ENCODE measurements at regions of chr11 and their contacts with region 1.

Region 1: GRCh38 chr11:126416542-126417090 is 61.1 kb downstream of the ST3GAL4 start:
- DNase-seq: no peak
- ATAC-seq: no peak
- H3K4me3 ChIP-seq: no peak overlapping the region
- H3K27ac ChIP-seq: no peak overlapping the region
- H3K4me1 ChIP-seq: peaks cover 5 to 9% of the 10 kb centered on the region in 2 experiments; a peak in 3 of 5 replicates
- H3K27me3 ChIP-seq: peaks cover 0 to 5% of the 10 kb centered on the region in 2 experiments; a peak in 1 of 5 replicates
- CTCF ChIP-seq: no peak
- EP300 ChIP-seq: no peak
- POLR2A ChIP-seq: no peak
- RAD21 ChIP-seq: no peak

Region 2: DNA sequence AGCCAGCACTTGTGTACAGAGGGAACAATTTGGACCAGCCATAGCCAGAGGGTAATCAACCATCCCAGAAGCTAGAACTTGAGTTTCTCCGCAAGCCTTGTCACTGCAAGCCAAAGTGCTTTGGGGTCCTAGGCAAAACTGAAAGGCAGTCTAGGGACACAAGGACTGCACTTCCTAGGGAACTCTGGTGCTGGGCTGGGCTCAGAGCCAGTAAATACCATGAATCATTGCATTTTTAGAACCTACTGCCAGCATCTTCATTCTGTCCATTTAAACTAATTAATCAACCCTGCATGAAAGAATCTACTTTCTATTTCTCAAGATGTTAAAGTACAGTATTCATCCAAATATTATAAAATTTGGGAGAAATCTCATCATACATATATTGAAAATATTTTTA is 608.7 kb before region 1 on chr11:
- CTCF ChIA-PET with region 1: no interaction called
- POLR2A ChIA-PET with region 1: no interaction called
- in situ Hi-C with region 1: no loop called
- intact Hi-C with region 1: no loop called
- DNase-seq: no peak
- ATAC-seq: no peak
- H3K4me3 ChIP-seq: no peak overlapping the region
- H3K27ac ChIP-seq: no peak overlapping the region
- H3K4me1 ChIP-seq: no peaks in the 10 kb centered on the region
- H3K27me3 ChIP-seq: no peaks in the 10 kb centered on the region
- CTCF ChIP-seq: no peak
- EP300 ChIP-seq: no peak
- POLR2A ChIP-seq: no peak
- RAD21 ChIP-seq: no peak

Region 3: DNA sequence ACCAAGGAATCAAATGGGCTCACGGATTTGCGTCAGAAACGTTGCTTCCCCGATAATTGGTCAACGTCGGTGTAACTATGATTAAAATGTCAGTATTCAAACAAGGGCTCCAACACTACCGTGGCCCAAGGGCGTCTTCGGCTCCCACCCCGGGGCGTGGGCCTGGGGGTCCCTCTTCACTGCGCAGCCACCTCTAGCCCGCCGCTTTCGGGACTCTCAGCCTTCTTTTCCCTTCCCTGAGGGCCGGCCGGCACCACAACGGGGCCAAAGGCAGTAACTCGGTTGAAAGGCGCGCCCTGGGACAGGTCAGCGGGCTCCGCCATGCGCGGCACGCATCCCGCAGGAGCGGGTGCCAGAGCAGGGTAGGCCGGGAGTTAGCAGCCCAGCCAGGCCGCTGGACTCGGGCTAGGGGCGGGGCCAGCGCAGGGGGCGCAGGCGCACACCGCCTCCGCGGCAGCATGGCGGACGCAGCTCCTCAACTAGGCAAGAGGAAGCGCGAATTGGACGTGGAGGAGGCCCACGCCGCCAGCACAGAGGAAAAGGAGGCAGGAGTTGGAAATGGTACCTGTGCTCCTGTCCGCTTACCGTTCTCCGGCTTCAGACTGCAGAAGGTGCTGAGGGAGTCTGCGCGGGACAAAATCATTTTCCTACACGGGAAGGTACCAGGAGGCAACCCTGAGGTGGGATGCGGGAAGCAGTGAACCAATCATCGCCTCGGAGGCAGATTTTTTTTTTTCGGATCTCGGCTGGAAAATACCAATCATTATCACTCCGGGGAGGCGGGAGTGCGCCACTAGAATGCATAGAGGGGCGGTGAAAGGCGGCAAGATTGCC is 112.8 kb before region 1 on chr11 and contains the start of gene DCPS:
- CTCF ChIA-PET with region 1: no interaction called
- POLR2A ChIA-PET with region 1: no interaction called
- in situ Hi-C with region 1: loop called (anchors 25 kb)
- intact Hi-C with region 1: no loop called
- DNase-seq: peak; percentile 92 to 96 (median 96)
- ATAC-seq: peak; percentile 99
- H3K4me3 ChIP-seq: peak within 1 kb of the TSS; percentile 57
- H3K27ac ChIP-seq: peak within 1 kb of the TSS; percentile 86
- H3K4me1 ChIP-seq: peaks cover 4 to 11% of the 10 kb centered on the region in 2 experiments; a peak in 3 of 5 replicates
- H3K27me3 ChIP-seq: no peaks in the 10 kb centered on the region; a peak in 1 of 5 replicates
- CTCF ChIP-seq: no peak
- EP300 ChIP-seq: no peak
- POLR2A ChIP-seq: peak; percentile 97
- RAD21 ChIP-seq: peak in 1 of 2 experiments; percentile 13; a peak in 1 of 4 replicates
- polyA plus RNA-seq, gene DCPS: 8.7 to 17.8 TPM

Region 4: GRCh38 chr11:126345759-126346585 is 70.6 kb before region 1 on chr11:
- CTCF ChIA-PET with region 1: no interaction called
- POLR2A ChIA-PET with region 1: no interaction called
- in situ Hi-C with region 1: no loop called
- intact Hi-C with region 1: loop called (anchors 2 kb)
- DNase-seq: peak; percentile 81 to 95 (median 86)
- ATAC-seq: peak; percentile 87
- H3K4me3 ChIP-seq: no peak overlapping the region
- H3K27ac ChIP-seq: peak overlapping the region; percentile 94
- H3K4me1 ChIP-seq: peaks cover 57 to 82% of the 10 kb centered on the region in 2 experiments
- H3K27me3 ChIP-seq: no peaks in the 10 kb centered on the region
- CTCF ChIP-seq: no peak
- EP300 ChIP-seq: peak; percentile 92
- POLR2A ChIP-seq: peak; percentile 59; the same call in 1 of the 2 replicates
- RAD21 ChIP-seq: 0 out of 4 replicates have a peak, but pooled peaks have one; percentile 7 to 12

Region 5: DNA sequence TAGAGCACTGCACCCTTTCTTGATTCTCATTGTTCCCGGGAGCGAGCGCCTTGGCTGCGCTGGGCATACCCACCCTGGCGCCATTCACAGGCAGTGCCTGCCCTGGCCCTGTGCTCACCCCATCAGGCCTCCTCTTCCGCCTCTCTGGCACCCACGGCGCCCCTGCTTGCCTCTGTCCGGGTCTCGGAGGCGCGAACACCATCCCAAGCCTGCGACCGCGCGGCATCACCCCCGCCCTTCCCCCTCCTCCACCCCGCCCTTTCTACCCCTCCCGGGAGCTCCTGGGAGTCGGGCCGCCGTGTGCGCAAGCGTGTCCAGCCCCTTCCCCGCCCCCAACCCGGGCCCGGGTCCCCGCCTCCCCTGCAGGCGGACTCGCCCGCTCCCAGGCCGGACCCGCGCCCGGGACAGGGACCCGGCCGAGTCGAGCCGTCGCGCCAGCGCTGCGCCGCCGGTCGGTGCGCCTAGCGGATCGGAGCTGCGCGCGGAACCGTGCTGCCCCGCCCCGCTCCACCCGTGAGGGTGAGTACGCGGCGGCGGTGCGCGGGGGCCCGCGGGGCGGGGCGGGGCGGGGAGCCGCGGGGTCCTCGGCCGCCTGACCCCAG is 61.2 kb before region 1 on chr11 and contains the start of gene ST3GAL4:
- CTCF ChIA-PET with region 1: no interaction called
- POLR2A ChIA-PET with region 1: no interaction called
- in situ Hi-C with region 1: no loop called
- intact Hi-C with region 1: loop called (anchors 2 kb)
- DNase-seq: peak; percentile 88 to 98 (median 96)
- ATAC-seq: peak; percentile 83
- H3K4me3 ChIP-seq: peak within 1 kb of the TSS; percentile 65
- H3K27ac ChIP-seq: peak within 1 kb of the TSS; percentile 91
- H3K4me1 ChIP-seq: peaks cover 47 to 59% of the 10 kb centered on the region in 2 experiments
- H3K27me3 ChIP-seq: no peaks in the 10 kb centered on the region
- CTCF ChIP-seq: no peak
- EP300 ChIP-seq: no peak
- POLR2A ChIP-seq: peak; percentile 78
- RAD21 ChIP-seq: no peak
- polyA plus RNA-seq, gene ST3GAL4: 0.27 to 0.53 TPM

Region 6: DNA sequence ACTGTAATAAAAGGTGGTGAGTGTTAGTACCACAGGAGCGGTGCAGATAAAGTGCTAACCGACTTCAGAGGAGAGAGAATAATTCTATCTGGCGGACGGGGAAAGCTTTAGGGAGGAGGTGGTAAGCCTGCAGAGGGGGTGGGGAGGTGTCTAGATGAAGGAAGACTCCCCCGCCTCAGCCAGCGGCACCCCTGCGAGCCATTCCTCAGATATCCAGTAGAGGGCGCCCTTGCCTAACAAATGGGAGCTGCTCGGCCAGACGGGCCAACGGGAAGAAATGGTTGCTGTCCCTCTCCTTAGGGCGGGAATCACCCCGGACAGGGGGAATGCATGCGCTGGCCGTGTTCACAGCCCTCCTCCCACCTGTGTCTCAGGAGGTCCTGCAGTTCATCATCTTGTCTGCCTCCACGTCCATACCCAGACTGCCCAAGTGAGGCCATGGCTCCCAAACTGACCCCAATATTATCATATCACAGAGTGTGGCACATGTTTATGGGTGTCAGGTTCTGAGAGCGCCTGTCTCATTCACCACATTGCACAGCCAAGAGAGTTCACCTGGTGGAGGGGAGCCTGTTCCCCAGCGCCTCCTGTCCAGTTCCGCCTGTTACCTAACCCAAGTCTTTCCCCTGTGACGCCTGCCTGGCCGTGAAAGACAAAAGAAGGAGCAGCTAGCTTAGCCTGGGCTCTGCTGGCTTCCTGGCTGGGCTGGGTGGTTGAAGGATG is 24.3 kb after region 1 on chr11:
- CTCF ChIA-PET with region 1: no interaction called
- POLR2A ChIA-PET with region 1: no interaction called
- in situ Hi-C with region 1: no loop called
- intact Hi-C with region 1: no loop called
- DNase-seq: peak; percentile 87 to 96 (median 94)
- ATAC-seq: peak; percentile 96
- H3K4me3 ChIP-seq: no peak overlapping the region
- H3K27ac ChIP-seq: no peak overlapping the region
- H3K4me1 ChIP-seq: peaks cover 0 to 4% of the 10 kb centered on the region in 2 experiments; a peak in 4 of 5 replicates
- H3K27me3 ChIP-seq: peaks cover 4 to 42% of the 10 kb centered on the region in 2 experiments; a peak in 3 of 5 replicates
- CTCF ChIP-seq: peak; percentile 89 to 91 (median 90)
- EP300 ChIP-seq: no peak
- POLR2A ChIP-seq: no peak
- RAD21 ChIP-seq: peak; percentile 91 to 95

Measured in K562 (cell line).